ENCODE measurements at regions of chr6 and their contacts with region 1.

Region 1: DNA sequence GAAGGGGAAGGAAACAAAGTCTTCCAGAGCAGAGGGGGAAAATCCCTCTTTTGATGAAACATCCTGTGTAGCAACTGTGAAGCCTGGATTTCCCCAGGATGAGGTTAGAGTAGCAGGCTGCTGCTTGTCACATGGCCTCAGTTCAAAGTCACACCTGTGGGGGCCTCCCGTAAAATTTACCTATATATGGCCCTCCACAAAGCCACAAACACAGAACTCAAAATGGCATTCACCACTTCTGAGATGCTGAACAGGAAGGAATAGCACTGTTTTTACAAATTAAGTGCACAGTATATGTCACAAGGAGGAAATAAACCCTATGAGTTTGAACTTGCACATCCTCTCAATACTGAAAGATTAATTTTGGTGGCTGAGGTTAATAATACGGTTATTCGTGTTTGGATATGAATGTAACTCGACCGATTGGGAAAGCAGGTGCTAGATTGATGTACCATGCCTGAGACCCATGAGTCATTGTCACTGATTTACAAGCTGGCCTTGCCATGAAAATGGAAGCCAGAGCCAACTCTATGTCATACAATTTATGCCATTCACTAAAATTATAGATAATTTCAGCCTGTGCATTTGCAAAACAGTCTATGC is 70.6 kb downstream of the SGK1 start:
- DNase-seq: peak; percentile 94
- H3K4me3 Mint-ChIP-seq: peak overlapping the region; percentile 27
- H3K27ac Mint-ChIP-seq: peak overlapping the region; percentile 97
- H3K4me1 Mint-ChIP-seq: peaks cover 58% of the 10 kb centered on the region
- H3K27me3 Mint-ChIP-seq: no peaks in the 10 kb centered on the region

Region 2: DNA sequence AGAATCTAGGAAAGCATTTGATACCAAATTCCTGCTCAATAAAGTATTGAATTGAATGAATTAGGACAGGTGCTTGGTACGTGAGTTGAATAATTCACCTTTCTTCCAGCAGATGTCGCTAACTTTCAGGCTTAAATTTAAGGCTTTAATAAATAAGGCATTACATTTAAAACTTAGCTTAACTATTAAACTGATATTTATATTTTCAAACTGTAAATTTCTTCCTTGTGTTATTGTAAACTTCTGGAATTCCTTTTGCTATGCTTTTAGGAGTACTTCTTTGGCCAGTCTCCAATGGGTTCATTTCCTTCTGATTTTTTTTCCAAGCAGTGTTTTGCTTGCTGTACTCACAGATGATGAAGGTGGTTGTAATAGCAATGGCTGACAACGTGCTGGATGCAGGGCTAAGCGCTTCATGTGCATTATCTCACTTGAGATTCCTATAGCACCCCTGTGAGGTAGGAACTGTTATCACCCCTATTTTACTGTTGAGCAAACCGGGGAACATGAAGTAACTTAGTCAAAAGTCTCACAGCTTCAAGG is 123.6 kb before region 1 on chr6:
- CTCF ChIA-PET with region 1: no interaction called
- intact Hi-C with region 1: no loop called
- DNase-seq: no peak
- H3K4me3 Mint-ChIP-seq: no peak overlapping the region
- H3K27ac Mint-ChIP-seq: no peak overlapping the region
- H3K4me1 Mint-ChIP-seq: no peaks in the 10 kb centered on the region
- H3K27me3 Mint-ChIP-seq: no peaks in the 10 kb centered on the region

Region 3: DNA sequence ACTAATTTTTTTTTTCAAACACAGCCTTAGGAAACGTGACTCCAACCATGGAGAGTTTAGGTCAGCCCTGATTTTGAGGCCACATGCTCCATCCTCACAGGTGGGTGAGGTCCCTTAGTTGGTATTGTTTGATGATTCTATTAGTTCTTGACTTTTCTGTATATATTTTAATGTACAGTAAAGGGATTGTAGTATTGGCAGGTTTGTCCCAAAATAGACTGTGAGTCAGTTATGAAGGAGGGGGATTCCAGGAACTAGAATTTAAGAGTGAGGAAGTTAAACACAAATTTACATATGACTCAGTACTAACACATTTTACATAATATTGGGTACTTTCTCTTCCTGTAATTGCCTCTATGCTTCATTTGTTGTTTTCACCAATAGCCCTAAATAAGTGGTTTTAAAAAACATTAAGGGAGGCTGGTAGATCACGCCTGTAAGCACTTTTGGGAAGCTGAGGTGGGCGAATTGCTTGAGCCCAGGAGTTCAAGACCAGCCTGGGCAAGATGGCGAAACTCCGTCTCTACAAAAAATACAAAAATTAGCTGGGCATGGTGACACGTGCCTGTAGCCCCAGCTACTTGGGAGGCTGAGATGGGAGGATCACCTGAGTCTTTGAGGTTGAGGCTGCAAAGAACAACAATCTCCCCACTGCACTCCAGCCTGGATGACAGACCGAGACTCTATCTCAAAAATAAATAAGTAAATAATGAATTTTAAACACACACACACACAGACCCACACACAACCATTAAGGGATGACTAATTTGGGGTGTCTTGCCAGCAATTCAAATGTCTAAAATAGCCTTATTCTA is 11.2 kb before region 1 on chr6:
- CTCF ChIA-PET with region 1: interaction called, 4 read pairs
- intact Hi-C with region 1: loop called (anchors 1 kb)
- DNase-seq: peak; percentile 41
- H3K4me3 Mint-ChIP-seq: peak overlapping the region; percentile 15
- H3K27ac Mint-ChIP-seq: peak overlapping the region; percentile 95
- H3K4me1 Mint-ChIP-seq: peaks cover 57% of the 10 kb centered on the region
- H3K27me3 Mint-ChIP-seq: no peaks in the 10 kb centered on the region

Region 4: DNA sequence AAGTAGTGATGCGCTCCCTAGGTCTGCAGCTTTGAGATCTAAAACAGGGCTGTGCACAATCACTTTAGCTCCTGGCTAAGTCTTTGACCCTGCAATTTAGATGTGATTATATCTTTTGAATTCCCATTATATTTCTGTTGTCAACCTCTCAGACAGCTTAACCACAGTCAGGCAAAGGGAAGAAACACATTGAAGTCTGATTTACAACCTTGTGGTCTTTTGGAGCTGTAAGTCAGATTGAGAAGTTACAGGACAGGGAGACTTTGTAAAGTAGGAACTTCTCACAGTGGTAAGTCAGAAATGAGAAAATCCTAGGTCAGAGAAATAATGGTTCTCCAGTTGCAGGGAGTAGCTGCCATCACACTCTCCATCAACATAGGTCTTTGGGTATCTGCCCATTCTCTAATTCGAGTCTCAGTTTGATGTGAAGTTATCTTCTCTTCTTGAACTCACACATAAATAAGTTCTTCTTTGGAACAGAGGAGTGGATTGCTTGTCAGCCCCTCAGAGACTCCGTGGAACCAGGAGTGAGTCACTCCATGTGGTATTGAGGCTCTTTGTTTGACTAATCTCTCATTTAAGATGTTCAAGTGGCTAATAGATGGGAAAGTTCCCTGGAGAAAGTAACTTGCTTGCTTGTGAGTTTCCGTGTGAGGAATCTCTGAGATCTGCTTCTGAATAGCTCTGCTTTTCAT is 105.6 kb after region 1 on chr6:
- CTCF ChIA-PET with region 1: no interaction called
- intact Hi-C with region 1: loop called (anchors 1 kb)
- DNase-seq: peak; percentile 53
- H3K4me3 Mint-ChIP-seq: no peak overlapping the region
- H3K27ac Mint-ChIP-seq: no peak overlapping the region
- H3K4me1 Mint-ChIP-seq: peaks cover 29% of the 10 kb centered on the region
- H3K27me3 Mint-ChIP-seq: no peaks in the 10 kb centered on the region

Region 5: GRCh38 chr6:134424165-134424790 is 176.9 kb after region 1 on chr6:
- CTCF ChIA-PET with region 1: no interaction called
- intact Hi-C with region 1: loop called (anchors 1 kb)
- DNase-seq: no peak
- H3K4me3 Mint-ChIP-seq: no peak overlapping the region
- H3K27ac Mint-ChIP-seq: no peak overlapping the region
- H3K4me1 Mint-ChIP-seq: peaks cover 25% of the 10 kb centered on the region
- H3K27me3 Mint-ChIP-seq: no peaks in the 10 kb centered on the region

Region 6: GRCh38 chr6:134574491-134574890 is 327.2 kb after region 1 on chr6:
- CTCF ChIA-PET with region 1: no interaction called
- intact Hi-C with region 1: loop called (anchors 1 kb)
- DNase-seq: no peak
- H3K4me3 Mint-ChIP-seq: no peak overlapping the region
- H3K27ac Mint-ChIP-seq: no peak overlapping the region
- H3K4me1 Mint-ChIP-seq: peaks cover 7% of the 10 kb centered on the region
- H3K27me3 Mint-ChIP-seq: no peaks in the 10 kb centered on the region

Region 7: DNA sequence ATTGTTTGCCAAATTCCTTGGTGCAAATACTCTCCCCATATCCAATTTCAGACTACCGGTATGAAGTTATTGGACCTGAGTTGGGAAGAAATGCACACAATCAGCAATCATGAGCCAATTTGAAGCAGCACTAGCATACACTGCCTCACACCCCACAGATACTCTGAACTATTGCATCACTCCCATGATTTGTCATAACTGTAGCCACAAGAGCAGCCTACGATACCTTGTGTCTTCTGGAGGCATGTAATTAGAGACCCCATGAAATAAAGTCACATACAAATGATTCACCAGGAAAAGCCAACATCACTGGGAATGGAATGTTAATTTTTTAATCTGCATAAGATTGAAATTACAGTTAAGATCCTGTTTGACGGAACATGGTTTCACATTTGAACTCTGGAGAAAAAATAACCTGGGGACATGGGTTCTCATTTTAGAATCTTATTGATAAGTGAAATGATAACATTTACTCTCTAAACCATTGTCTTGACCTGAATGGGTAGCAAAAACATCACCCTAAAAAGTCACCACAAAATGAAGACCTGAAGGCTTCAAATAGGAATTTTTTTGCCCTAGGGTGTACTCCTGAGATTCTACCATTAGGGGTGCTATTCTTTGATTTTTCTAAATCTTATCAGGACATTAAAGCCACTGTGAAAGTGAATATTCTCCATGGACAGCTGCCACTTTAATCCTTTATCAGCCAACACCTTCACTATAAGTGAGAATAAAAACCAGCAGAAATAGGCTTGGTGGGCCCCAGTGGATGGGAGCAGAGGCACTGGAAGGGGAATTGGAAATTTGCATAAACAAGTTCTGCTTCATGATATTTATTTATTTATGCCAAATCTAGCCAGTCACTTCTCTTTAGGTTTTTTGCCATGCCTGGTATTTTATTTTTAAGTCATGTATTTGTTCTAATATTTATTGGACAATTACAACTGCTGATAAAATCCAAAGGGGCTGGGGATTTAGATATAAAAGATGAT is 841.8 kb after region 1 on chr6:
- CTCF ChIA-PET with region 1: no interaction called
- intact Hi-C with region 1: loop called (anchors 2 kb)
- DNase-seq: peak; percentile 61
- H3K4me3 Mint-ChIP-seq: peak overlapping the region; percentile 23
- H3K27ac Mint-ChIP-seq: peak overlapping the region; percentile 78
- H3K4me1 Mint-ChIP-seq: peaks cover 86% of the 10 kb centered on the region
- H3K27me3 Mint-ChIP-seq: no peaks in the 10 kb centered on the region

Region 8: DNA sequence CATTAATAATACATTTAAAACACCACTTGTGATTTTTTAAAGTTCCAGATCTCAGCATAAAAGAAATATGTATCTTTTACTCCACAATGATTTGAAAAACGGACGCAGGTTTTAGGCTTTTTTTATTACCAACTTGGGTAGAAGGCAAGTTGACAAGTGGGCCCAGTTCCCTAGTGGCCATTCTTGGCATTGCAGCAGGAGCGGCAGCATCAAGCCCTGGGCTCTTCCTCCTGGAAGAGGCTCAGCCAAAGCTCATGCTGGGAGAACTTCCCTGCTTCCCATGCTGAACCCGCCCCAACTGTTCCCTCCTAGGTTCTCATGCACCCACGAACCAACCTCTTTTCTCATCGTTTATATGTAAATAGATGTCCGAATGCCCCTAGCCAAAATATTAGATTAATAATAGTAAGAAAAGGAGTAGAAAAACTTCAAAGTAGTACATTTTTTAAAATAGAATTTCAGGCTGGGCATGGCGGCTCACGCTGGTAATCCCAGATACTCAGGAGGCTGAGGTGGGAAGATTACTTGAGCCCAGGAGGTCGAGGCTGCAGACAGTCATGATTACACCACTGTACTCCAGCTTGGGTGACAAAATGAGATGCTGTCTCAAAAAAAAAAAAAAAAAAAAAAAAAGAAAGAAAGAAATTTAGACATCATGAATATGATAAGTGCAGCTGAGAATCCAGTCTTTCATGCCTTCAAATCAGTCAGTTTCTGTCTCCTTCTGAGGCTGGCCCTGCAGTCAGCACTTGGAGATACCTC is 915.5 kb after region 1 on chr6:
- CTCF ChIA-PET with region 1: no interaction called
- intact Hi-C with region 1: loop called (anchors 5 kb)
- DNase-seq: peak; percentile 56
- H3K4me3 Mint-ChIP-seq: no peak overlapping the region
- H3K27ac Mint-ChIP-seq: peak overlapping the region; percentile 77
- H3K4me1 Mint-ChIP-seq: peaks cover 58% of the 10 kb centered on the region
- H3K27me3 Mint-ChIP-seq: no peaks in the 10 kb centered on the region